ENCODE measurements at regions of chr13 and their contacts with region 1.

Region 1: GRCh38 chr13:21075011-21075898 is 13.9 kb upstream of the LATS2 start:
- DNase-seq: peak; percentile 78
- H3K4me3 Mint-ChIP-seq: peak overlapping the region; percentile 51
- H3K27ac Mint-ChIP-seq: peak overlapping the region; percentile 35
- H3K4me1 Mint-ChIP-seq: peaks cover 14% of the 10 kb centered on the region
- H3K27me3 Mint-ChIP-seq: peaks cover 14% of the 10 kb centered on the region

Region 2: GRCh38 chr13:20974981-20975540 is 100.2 kb before region 1 on chr13:
- intact Hi-C with region 1: no loop called
- DNase-seq: no peak
- H3K4me3 Mint-ChIP-seq: no peak overlapping the region
- H3K27ac Mint-ChIP-seq: no peak overlapping the region
- H3K4me1 Mint-ChIP-seq: no peaks in the 10 kb centered on the region
- H3K27me3 Mint-ChIP-seq: peaks cover 3% of the 10 kb centered on the region

Region 3: DNA sequence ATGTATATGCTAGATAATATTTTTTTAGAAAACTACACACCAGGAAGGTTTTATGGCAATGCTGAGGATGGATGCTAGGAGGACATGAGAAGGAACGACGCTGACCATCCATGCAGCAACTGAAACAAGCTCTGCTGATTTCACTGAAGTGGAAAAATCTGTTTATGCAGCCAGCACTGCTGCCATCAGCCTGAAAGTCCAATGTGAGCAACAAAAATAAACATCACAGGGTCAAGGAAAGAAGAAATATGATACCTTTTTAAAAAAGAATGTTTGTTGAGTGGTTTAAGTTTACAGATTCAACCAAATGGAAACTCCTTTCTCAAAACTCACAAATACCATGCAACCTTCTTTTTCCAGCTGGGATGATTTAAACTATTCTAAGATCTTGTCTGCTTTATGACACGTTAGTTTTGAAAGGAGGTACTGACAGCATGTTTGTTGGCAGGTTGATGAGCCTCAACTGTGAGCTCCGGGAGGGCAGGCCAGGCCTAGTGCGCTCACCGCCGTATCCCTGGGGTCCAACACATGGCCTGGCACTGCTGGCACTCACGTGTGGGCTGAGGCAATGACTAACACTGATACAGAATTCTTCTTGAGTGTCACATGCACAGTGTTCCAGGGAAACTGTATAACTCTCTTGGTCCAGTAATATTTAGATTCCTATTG is 60.6 kb before region 1 on chr13:
- intact Hi-C with region 1: loop called (anchors 5 kb)
- DNase-seq: no peak
- H3K4me3 Mint-ChIP-seq: no peak overlapping the region
- H3K27ac Mint-ChIP-seq: no peak overlapping the region
- H3K4me1 Mint-ChIP-seq: peaks cover 32% of the 10 kb centered on the region
- H3K27me3 Mint-ChIP-seq: no peaks in the 10 kb centered on the region

Region 4: DNA sequence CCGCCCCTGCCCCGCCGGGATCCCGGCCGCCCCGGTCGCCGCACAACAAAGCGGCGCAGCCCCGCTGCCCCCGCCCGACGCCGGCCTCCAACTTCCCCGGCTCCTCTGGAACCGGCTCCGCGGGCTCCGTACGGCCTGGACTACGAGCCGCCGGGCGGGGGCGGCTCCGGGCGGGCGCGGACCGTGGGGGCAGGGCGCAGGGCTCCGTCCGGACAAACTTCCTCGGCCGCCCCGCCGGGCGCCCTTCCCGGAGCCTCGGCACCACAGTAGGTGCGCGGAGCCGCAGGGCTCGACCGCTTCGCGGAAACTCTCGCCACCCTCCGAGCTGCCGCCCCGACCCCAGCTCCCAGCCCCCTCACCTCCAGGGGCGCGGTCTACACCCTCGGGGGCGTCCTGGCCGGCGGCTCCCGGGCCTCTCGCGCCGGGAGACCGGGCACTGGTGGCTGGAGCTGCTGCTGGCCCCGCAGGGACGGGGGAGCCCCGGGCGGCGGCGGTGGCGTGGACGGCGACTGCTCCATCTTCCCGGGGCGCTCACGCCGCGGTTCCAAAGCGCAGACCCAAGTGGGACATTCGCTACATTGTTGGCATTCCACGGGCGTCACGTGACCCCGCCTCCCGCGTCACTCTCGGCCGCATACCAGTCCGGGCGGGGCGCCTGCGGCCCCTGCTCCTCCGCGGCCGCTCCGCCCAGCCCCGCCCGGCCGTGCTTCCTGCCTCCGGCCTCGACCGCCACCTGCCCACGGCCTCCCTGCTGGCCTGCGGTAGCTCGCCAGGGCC is 14.1 kb before region 1 on chr13 and contains the start of gene LATS2:
- intact Hi-C with region 1: loop called (anchors 1 kb)
- DNase-seq: peak; percentile 89
- H3K4me3 Mint-ChIP-seq: peak within 1 kb of the TSS; percentile 83
- H3K27ac Mint-ChIP-seq: peak within 1 kb of the TSS; percentile 26
- H3K4me1 Mint-ChIP-seq: peaks cover 5% of the 10 kb centered on the region
- H3K27me3 Mint-ChIP-seq: peaks cover 50% of the 10 kb centered on the region
- total RNA-seq, gene LATS2: 1.7 and 2.2 TPM in 2 replicates

Region 5: DNA sequence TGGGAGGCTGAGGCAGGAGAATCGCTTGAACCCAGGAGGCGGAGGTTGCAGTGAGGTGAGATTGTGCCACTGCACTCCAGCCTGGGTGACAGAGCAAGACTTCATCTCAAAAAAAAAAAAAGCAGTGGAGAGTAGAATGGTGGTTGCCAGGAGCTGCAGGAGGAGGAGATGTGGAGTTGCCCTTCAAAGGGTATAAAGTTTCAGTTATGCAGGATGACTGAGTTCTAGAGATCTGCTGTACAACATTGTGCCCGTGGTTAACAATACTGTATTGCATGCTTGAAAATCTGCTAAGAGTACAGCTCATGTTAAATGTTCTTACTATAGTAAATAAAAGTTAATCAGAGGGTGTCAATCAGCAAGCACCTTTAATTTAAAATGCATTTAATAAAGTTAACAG is 14.6 kb after region 1 on chr13:
- intact Hi-C with region 1: no loop called
- DNase-seq: no peak
- H3K4me3 Mint-ChIP-seq: no peak overlapping the region
- H3K27ac Mint-ChIP-seq: no peak overlapping the region
- H3K4me1 Mint-ChIP-seq: no peaks in the 10 kb centered on the region
- H3K27me3 Mint-ChIP-seq: peaks cover 9% of the 10 kb centered on the region

Measured in activated CD4-positive, alpha-beta T cell treated with anti-CD3 and anti-CD28 coated beads, Interleukin-2, amount 10 ng/mL, durations not matched to agents 24 days and 14 days (primary cell).